GM13976 (cell line): ENCODE measurements at regions of chr1 and their contacts with region 1.

Region 1: DNA sequence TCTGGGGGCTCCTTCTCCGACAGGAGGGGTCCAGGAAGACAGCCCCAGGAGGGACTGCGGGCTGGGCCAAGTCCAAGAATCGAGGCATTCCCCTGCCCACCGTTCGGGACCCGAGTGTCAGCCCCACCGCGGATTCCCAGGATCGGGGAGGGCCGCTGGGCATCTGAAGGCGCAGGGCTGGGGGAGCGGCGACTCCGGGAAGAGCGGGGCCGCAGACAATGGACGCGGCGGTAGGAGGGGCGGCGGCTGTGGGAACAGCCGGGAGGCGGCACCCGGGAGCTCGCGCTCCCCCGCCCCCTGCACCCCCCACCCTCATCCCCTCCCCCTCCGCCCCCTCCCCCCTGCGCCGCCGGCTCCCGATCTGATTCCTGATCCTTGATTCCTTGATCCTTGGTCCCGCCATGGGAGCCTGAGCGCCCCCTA is at the start of gene VANGL2:
- DNase-seq: peak; percentile 83
- CTCF ChIP-seq: no peak

Region 2: GRCh38 chr1:159705251-159705903 is 694.9 kb before region 1 on chr1:
- in situ Hi-C with region 1: no loop called
- DNase-seq: no peak
- CTCF ChIP-seq: no peak

Region 3: GRCh38 chr1:160205242-160206035 is 194.8 kb before region 1 on chr1 and contains the start of gene PEA15:
- in situ Hi-C with region 1: no loop called
- DNase-seq: peak; percentile 90
- CTCF ChIP-seq: no peak

Region 4: GRCh38 chr1:160830321-160831153 is 430.3 kb after region 1 on chr1:
- in situ Hi-C with region 1: no loop called
- DNase-seq: peak; percentile 60
- CTCF ChIP-seq: peak; percentile 64

Region 5: GRCh38 chr1:160951443-160952128 is 551.4 kb after region 1 on chr1:
- in situ Hi-C with region 1: loop called (anchors 25 kb)
- DNase-seq: peak; percentile 83
- CTCF ChIP-seq: peak; percentile 79